ENCODE measurements at regions of chr6 and their contacts with region 1.

Region 1: GRCh38 chr6:5214570-5215052 is 46.1 kb downstream of the LYRM4 start:
- DNase-seq: peak; percentile 64 to 84 (median 76)
- ATAC-seq: peak; percentile 98
- H3K4me3 ChIP-seq: no peak overlapping the region
- H3K27ac ChIP-seq: no peak overlapping the region
- H3K4me1 ChIP-seq: peaks cover 0 to 12% of the 10 kb centered on the region in 2 experiments; a peak in 3 of 5 replicates
- H3K27me3 ChIP-seq: no peaks in the 10 kb centered on the region
- CTCF ChIP-seq: peak; percentile 94 to 98 (median 96)
- EP300 ChIP-seq: no peak
- POLR2A ChIP-seq: no peak
- RAD21 ChIP-seq: peak; percentile 77 to 97

Region 2: GRCh38 chr6:4889701-4890100 is 324.9 kb before region 1 on chr6:
- CTCF ChIA-PET with region 1: no interaction called
- POLR2A ChIA-PET with region 1: no interaction called
- in situ Hi-C with region 1: no loop called
- intact Hi-C with region 1: no loop called
- DNase-seq: no peak
- ATAC-seq: no peak
- H3K4me3 ChIP-seq: no peak overlapping the region
- H3K27ac ChIP-seq: no peak overlapping the region
- H3K4me1 ChIP-seq: no peaks in the 10 kb centered on the region
- H3K27me3 ChIP-seq: no peaks in the 10 kb centered on the region
- CTCF ChIP-seq: no peak
- EP300 ChIP-seq: no peak
- POLR2A ChIP-seq: no peak
- RAD21 ChIP-seq: no peak

Region 3: GRCh38 chr6:5058254-5058653 is 156.4 kb before region 1 on chr6:
- CTCF ChIA-PET with region 1: no interaction called
- POLR2A ChIA-PET with region 1: no interaction called
- in situ Hi-C with region 1: no loop called
- intact Hi-C with region 1: loop called (anchors 5 kb)
- DNase-seq: no peak
- ATAC-seq: peak; percentile 51
- H3K4me3 ChIP-seq: no peak overlapping the region
- H3K27ac ChIP-seq: no peak overlapping the region
- H3K4me1 ChIP-seq: no peaks in the 10 kb centered on the region
- H3K27me3 ChIP-seq: peaks cover 11 to 23% of the 10 kb centered on the region in 2 experiments; a peak in 4 of 5 replicates
- CTCF ChIP-seq: no peak
- EP300 ChIP-seq: no peak
- POLR2A ChIP-seq: no peak
- RAD21 ChIP-seq: no peak

Region 4: GRCh38 chr6:5143634-5144311 is 70.8 kb before region 1 on chr6:
- CTCF ChIA-PET with region 1: no interaction called
- POLR2A ChIA-PET with region 1: interaction called, 3 read pairs
- in situ Hi-C with region 1: no loop called
- intact Hi-C with region 1: loop called (anchors 2 kb)
- DNase-seq: peak; percentile 70 to 86 (median 76)
- ATAC-seq: peak; percentile 95
- H3K4me3 ChIP-seq: no peak overlapping the region
- H3K27ac ChIP-seq: no peak overlapping the region
- H3K4me1 ChIP-seq: no peaks in the 10 kb centered on the region
- H3K27me3 ChIP-seq: no peaks in the 10 kb centered on the region
- CTCF ChIP-seq: peak; percentile 91 to 97 (median 94)
- EP300 ChIP-seq: no peak
- POLR2A ChIP-seq: no peak
- RAD21 ChIP-seq: peak; percentile 96 to 97

Region 5: DNA sequence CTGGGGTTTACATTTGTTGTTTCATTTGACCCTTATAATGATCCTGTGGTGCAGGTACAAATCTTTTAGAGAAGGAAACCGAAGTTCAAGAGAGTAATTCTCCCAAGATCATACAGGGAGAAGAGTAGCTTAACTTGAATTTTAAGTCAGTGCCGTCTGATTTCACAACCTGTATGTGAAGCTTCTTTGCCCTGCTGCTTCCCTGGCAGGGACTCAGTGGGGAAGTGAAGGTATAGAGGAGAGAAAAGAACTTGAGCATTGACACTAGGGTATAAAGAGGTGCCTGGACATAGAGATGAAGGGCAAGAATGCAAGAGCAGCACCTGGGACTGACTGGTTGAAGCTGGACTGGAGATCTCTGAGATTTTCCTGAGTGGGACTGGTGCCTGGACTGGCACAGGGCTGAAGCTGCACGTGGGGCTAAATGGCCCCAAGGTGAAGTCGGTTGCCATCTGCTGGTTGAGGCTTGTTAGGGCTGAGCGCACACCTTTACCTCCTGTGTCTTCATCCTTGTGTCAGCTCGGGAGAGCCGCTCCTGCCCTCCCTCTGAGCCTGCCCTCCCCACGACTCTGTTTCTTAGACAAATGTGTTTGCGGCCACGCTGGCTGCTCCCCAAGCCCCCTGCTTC is 88.5 kb after region 1 on chr6:
- CTCF ChIA-PET with region 1: no interaction called
- POLR2A ChIA-PET with region 1: no interaction called
- in situ Hi-C with region 1: no loop called
- intact Hi-C with region 1: loop called (anchors 2 kb)
- DNase-seq: peak in 2 of 4 experiments; percentile 30 to 48
- ATAC-seq: peak; percentile 77
- H3K4me3 ChIP-seq: no peak overlapping the region
- H3K27ac ChIP-seq: peak overlapping the region; percentile 49; the same call in 1 of the 3 replicates
- H3K4me1 ChIP-seq: peaks cover 22 to 39% of the 10 kb centered on the region in 2 experiments; a peak in 4 of 5 replicates
- H3K27me3 ChIP-seq: no peaks in the 10 kb centered on the region
- CTCF ChIP-seq: peak; percentile 50 to 53 (median 52); a peak in 4 of 6 replicates
- EP300 ChIP-seq: no peak
- POLR2A ChIP-seq: no peak
- RAD21 ChIP-seq: peak; percentile 34 to 57; a peak in 3 of 4 replicates

Region 6: GRCh38 chr6:5379647-5380242 is 165.1 kb after region 1 on chr6:
- CTCF ChIA-PET with region 1: interaction called, 4 read pairs
- POLR2A ChIA-PET with region 1: no interaction called
- in situ Hi-C with region 1: no loop called
- intact Hi-C with region 1: loop called (anchors 1 kb)
- DNase-seq: peak; percentile 16 to 64 (median 32)
- ATAC-seq: peak; percentile 82
- H3K4me3 ChIP-seq: no peak overlapping the region
- H3K27ac ChIP-seq: no peak overlapping the region
- H3K4me1 ChIP-seq: no peaks in the 10 kb centered on the region; a peak in 1 of 5 replicates
- H3K27me3 ChIP-seq: no peaks in the 10 kb centered on the region
- CTCF ChIP-seq: peak; percentile 74 to 89 (median 83)
- EP300 ChIP-seq: no peak
- POLR2A ChIP-seq: no peak
- RAD21 ChIP-seq: peak; percentile 52 to 87

Region 7: GRCh38 chr6:5398530-5398929 is 183.9 kb after region 1 on chr6:
- CTCF ChIA-PET with region 1: interaction called, 25 read pairs
- POLR2A ChIA-PET with region 1: no interaction called
- in situ Hi-C with region 1: loop called (anchors 5 kb)
- intact Hi-C with region 1: loop called (anchors 1 kb)
- DNase-seq: peak; percentile 32 to 67 (median 43)
- ATAC-seq: peak; percentile 93
- H3K4me3 ChIP-seq: no peak overlapping the region
- H3K27ac ChIP-seq: no peak overlapping the region
- H3K4me1 ChIP-seq: 0 out of 5 replicates have a peak, but pooled peaks cover 0 to 4% of the 10 kb centered on the region in 2 experiments
- H3K27me3 ChIP-seq: no peaks in the 10 kb centered on the region
- CTCF ChIP-seq: peak; percentile 47 to 77 (median 59); a peak in 5 of 6 replicates
- EP300 ChIP-seq: no peak
- POLR2A ChIP-seq: no peak
- RAD21 ChIP-seq: peak; percentile 62 to 82